Mammary epithelial cell (primary cell): ENCODE measurements at regions of chr20 and their contacts with region 1.

Region 1: DNA sequence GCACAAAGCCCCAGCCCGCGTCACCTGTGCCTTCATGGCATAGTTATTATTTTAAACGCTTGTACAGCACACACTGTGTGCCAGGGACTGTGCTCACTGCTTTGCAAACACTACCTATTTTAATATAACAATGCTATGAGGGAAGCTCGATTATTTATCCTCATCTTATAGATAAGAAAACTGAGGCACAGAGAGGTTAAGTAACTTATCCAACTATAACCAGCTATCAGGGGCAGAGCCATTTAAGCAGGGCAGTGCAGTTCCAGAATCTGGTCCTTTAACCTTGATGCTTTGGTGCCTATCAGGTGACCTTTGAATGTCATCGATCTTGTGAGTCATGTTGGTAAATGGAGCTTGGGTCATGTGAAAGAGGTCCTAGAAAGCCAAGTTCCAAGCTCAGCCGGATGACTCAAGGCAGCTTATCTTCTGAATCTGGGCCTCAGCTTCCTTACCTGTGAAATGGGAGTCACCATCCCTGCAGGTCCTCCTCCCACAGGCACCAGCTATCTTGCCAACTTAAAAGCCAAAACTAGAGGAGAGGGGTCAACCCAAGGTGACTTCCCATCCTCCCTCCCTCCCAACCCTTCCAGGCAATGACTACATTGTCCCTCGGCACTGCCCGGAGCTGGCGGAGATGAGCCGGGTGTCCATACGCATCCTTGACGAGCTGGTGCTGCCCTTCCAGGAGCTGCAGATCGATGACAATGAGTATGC is 56.4 kb upstream of the TTPAL start:
- DNase-seq: no peak
- H3K4me3 ChIP-seq: no peak overlapping the region
- H3K27ac ChIP-seq: no peak overlapping the region
- H3K4me1 ChIP-seq: peaks cover 10% of the 10 kb centered on the region
- H3K27me3 ChIP-seq: no peaks in the 10 kb centered on the region
- CTCF ChIP-seq: no peak

Region 2: GRCh38 chr20:44938637-44939036 is 519.3 kb after region 1 on chr20:
- CTCF ChIA-PET with region 1: no interaction called
- dilution Hi-C with region 1: no loop called
- in situ Hi-C with region 1: no loop called
- intact Hi-C with region 1: loop called (anchors 5 kb)
- DNase-seq: no peak
- H3K4me3 ChIP-seq: no peak overlapping the region
- H3K27ac ChIP-seq: no peak overlapping the region
- H3K4me1 ChIP-seq: no peaks in the 10 kb centered on the region
- H3K27me3 ChIP-seq: no peaks in the 10 kb centered on the region
- CTCF ChIP-seq: no peak